ENCODE measurements at regions of chr11 and their contacts with region 1.

Region 1: GRCh38 chr11:60871378-60872061 is 4.2 kb downstream of the ZP1 start:
- DNase-seq: no peak
- H3K4me3 ChIP-seq: no peak overlapping the region
- H3K27ac ChIP-seq: no peak overlapping the region
- H3K4me1 ChIP-seq: peaks cover 10% of the 10 kb centered on the region
- H3K27me3 ChIP-seq: no peaks in the 10 kb centered on the region
- CTCF ChIP-seq: no peak

Region 2: GRCh38 chr11:59680287-59681154 is 1191.0 kb before region 1 on chr11:
- CTCF ChIA-PET with region 1: no interaction called
- dilution Hi-C with region 1: no loop called
- in situ Hi-C with region 1: no loop called
- intact Hi-C with region 1: no loop called
- DNase-seq: peak; percentile 64
- H3K4me3 ChIP-seq: no peak overlapping the region
- H3K27ac ChIP-seq: no peak overlapping the region
- H3K4me1 ChIP-seq: peaks cover 7% of the 10 kb centered on the region
- H3K27me3 ChIP-seq: no peaks in the 10 kb centered on the region
- CTCF ChIP-seq: peak; percentile 82 to 85

Region 3: GRCh38 chr11:60734279-60734678 is 137.2 kb before region 1 on chr11:
- CTCF ChIA-PET with region 1: interaction called, 12 read pairs
- dilution Hi-C with region 1: no loop called
- in situ Hi-C with region 1: no loop called
- intact Hi-C with region 1: no loop called
- DNase-seq: no peak
- H3K4me3 ChIP-seq: no peak overlapping the region
- H3K27ac ChIP-seq: no peak overlapping the region
- H3K4me1 ChIP-seq: no peaks in the 10 kb centered on the region
- H3K27me3 ChIP-seq: no peaks in the 10 kb centered on the region
- CTCF ChIP-seq: no peak

Region 4: DNA sequence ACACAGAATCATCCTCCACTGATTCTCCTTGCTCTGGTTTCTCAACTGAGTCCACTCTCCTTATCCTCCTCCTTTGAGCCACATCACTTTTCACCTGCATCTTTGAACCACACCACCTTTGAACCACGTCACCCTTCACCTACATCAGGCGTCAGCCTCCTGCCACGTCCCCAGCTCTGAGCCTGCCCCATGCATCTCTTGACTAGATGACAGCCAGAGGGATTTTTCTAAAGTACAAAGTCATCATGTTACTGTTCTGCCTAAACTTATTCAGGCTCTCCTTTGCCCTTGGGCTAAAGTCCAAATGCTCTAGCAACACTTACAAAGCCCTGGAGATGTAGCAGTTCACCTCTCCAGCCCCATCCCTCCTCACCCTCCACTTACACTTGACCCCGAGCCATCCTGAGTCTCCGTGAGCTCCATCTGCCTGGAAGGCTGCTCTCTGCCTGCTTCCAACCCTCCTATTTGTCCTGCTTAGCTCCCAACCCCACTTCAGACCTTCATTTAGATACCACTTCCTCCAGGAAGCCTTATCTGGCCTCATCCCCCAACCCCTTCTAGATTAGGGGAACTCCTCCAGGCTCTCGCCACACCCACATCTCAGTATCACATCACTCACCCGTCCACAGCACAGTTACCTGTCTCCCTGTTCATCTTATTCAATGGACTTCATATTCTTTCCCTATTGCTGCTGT is 90.1 kb before region 1 on chr11:
- CTCF ChIA-PET with region 1: no interaction called
- dilution Hi-C with region 1: loop called (anchors 5 kb)
- in situ Hi-C with region 1: no loop called
- intact Hi-C with region 1: no loop called
- DNase-seq: no peak
- H3K4me3 ChIP-seq: no peak overlapping the region
- H3K27ac ChIP-seq: no peak overlapping the region
- H3K4me1 ChIP-seq: no peaks in the 10 kb centered on the region
- H3K27me3 ChIP-seq: no peaks in the 10 kb centered on the region
- CTCF ChIP-seq: no peak

Region 5: GRCh38 chr11:60821827-60822599 is 49.5 kb before region 1 on chr11:
- CTCF ChIA-PET with region 1: no interaction called
- dilution Hi-C with region 1: loop called (anchors 5 kb)
- in situ Hi-C with region 1: no loop called
- intact Hi-C with region 1: no loop called
- DNase-seq: no peak
- H3K4me3 ChIP-seq: no peak overlapping the region
- H3K27ac ChIP-seq: no peak overlapping the region
- H3K4me1 ChIP-seq: no peaks in the 10 kb centered on the region
- H3K27me3 ChIP-seq: peaks cover 4% of the 10 kb centered on the region
- CTCF ChIP-seq: no peak

Region 6: GRCh38 chr11:60841797-60842667 is 29.5 kb before region 1 on chr11 and contains the start of gene CCDC86:
- CTCF ChIA-PET with region 1: no interaction called
- dilution Hi-C with region 1: no loop called
- in situ Hi-C with region 1: no loop called
- intact Hi-C with region 1: loop called (anchors 2 kb)
- DNase-seq: peak; percentile 94
- H3K4me3 ChIP-seq: peak within 1 kb of the TSS; percentile 76 to 94 (median 77)
- H3K27ac ChIP-seq: peak within 1 kb of the TSS; percentile 85
- H3K4me1 ChIP-seq: peaks cover 25% of the 10 kb centered on the region
- H3K27me3 ChIP-seq: no peaks in the 10 kb centered on the region
- CTCF ChIP-seq: no peak
- total RNA-seq, gene CCDC86: 14.7 to 58.0 TPM

Region 7: GRCh38 chr11:60932605-60933356 is 61.3 kb after region 1 on chr11:
- CTCF ChIA-PET with region 1: no interaction called
- dilution Hi-C with region 1: loop called (anchors 5 kb)
- in situ Hi-C with region 1: no loop called
- intact Hi-C with region 1: no loop called
- DNase-seq: no peak
- H3K4me3 ChIP-seq: no peak overlapping the region
- H3K27ac ChIP-seq: no peak overlapping the region
- H3K4me1 ChIP-seq: peaks cover 10% of the 10 kb centered on the region
- H3K27me3 ChIP-seq: no peaks in the 10 kb centered on the region
- CTCF ChIP-seq: no peak

Measured in mammary epithelial cell (primary cell).